Cardiac septum (tissue), 1 donor: ENCODE measurements at regions of chr11 and their contacts with region 1.

Region 1: GRCh38 chr11:45655347-45655756 is 10.1 kb downstream of the CHST1 start:
- DNase-seq: peak; percentile 80

Region 2: DNA sequence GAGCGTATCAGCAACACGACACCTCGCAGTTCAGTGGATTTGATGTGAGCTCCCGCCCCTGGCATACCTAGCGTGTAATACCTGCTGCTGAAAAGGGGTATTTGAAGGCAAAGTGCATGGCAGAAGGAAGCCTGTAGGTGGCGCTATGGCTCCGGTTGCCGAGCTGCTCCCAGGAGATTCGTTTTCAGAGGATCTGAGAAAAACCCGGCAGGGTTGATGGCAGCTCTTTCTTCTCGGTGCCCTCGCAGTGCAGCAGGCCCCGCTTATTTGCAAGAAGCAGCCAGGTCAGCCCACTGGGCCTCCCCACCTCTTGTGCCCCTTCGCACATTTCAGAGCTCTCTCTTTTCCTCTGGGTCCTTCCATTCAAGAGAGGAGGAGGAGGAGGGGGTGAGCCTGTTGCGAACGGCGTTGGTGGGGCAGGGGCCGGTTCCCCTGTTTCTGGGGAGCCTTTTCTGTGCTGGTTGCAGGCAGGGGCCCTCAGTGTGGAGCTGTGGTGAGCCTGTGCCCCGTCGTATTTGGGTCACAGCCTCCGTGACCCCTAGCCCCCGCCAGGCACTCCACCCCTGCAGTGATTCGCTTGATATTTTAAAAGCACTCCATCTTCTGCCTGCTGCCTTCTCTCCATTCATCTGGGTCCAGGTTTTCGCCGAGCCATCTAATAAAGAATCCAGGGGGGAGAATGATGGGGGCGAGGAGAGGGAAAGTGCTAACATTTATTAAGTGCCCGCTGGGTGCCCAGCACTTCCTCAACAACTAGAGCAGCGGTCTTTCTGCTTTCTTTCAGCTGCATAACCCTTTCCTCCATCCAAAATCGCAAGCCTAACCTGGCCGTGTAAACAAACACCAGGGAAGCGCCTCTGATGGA is 283.9 kb before region 1 on chr11:
- intact Hi-C with region 1: loop called (anchors 2 kb)
- DNase-seq: no peak

Region 3: GRCh38 chr11:45405916-45406670 is 249.3 kb before region 1 on chr11:
- intact Hi-C with region 1: loop called (anchors 10 kb)
- DNase-seq: peak; percentile 57